Posterior vena cava (tissue), 2 donors: ENCODE measurements at regions of chr3 and their contacts with region 1.

Region 1: DNA sequence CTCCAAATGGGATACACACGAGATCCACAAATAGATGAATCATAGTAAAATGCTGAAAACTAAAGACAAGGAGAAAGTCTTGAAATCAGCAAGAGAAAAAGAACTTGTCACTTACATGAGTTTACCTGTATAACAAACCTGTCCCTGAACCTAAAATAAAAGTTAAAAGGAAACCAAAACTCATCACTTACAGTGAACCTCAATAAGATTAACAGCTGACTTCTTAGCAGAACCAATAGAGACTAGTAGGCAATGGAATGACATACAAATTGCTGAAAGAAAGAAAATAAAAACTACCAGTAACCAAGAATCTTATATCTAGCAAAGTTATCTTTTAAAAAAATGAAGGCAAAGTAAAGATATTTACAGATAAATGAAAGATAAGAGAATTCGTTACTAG is 27.4 kb downstream of the SEC22A start:
- DNase-seq: no peak

Region 2: GRCh38 chr3:122926322-122926721 is 302.8 kb before region 1 on chr3:
- intact Hi-C with region 1: loop called in 1 of 2 experiments (anchors 2 kb)
- DNase-seq: no peak